Heart right ventricle (tissue), 16 donors: ENCODE measurements at regions of chr22 and their contacts with region 1.

Region 1: GRCh38 chr22:19454156-19454555 is 6.6 kb upstream of the C22orf39 start:
- DNase-seq: no peak
- ATAC-seq: no peak
- H3K4me3 ChIP-seq: no peak overlapping the region
- H3K27ac ChIP-seq: no peak overlapping the region
- H3K4me1 ChIP-seq: no peaks in the 10 kb centered on the region
- H3K27me3 ChIP-seq: no peaks in the 10 kb centered on the region
- CTCF ChIP-seq: no peak

Region 2: DNA sequence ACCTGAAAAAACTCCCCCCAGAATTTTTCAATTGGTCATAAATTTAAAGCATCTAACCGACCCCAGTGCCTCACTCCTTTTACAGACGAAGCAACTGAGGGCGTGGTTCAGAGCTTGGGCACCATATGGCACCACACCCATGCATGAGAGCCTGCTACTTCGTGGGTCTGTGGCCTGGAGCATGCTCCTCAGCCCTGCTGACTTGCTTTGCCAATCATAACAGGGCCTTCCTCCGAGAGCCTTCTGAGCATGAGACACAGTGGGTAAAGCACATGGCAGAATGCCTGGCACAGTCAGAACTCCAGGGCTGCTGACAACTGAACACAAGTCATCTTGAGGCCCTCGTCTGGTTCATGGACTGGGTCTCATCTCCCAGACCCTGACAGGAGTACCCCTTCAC is 56.0 kb before region 1 on chr22:
- intact Hi-C with region 1: loop called in 1 of 10 experiments (anchors 5 kb)
- DNase-seq: no peak
- ATAC-seq: peak in 1 of 8 donors; percentile 34
- H3K4me3 ChIP-seq: no peak overlapping the region
- H3K27ac ChIP-seq: no peak overlapping the region
- H3K4me1 ChIP-seq: peaks cover 0 to 9% (median 0%) of the 10 kb centered on the region in 9 donors
- H3K27me3 ChIP-seq: no peaks in the 10 kb centered on the region
- CTCF ChIP-seq: no peak

Region 3: DNA sequence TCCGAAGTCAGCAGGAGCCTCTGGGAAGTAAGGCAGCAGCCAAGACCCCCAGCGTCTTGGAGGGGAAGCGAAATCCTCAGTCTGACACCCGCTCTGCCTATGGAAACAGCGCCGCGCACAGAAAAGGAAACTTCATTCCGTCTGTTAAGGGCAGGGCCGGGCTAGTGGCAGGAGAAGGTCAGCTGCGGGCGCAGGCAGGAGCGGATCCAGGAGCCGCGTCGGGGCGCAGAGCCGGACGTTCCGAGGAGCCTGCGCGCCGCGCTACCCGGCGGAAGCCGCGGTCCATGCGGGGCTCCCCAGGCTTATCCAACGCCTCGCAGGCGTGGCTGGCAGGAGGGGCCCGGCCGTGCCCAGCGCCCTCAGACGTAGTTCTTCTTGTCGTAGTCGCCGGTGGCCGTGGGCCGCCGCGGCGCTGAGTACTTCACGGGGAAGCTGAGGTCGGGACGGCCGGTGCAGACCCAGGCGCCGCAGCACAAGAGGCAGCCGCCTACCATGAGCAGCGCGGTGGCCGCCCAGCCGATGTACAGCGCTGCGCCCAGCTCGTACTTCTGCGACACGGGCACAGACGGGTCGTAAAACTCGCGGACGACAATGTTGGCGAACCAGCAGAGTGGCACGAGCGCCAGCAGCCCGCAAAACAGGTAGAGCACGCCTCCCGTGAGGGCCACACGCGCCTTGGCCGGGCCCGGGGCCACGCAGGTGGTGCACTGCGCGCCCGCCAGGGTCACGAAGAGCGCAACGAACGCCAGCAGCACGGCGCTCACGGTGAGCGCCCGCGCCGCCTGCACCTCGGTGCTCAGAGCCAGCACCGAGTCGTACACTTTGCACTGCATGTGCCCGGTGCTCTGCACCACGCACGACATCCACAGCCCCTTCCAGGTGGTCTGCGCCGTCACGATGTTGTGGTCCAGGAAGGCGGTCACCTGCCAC is 69.3 kb after region 1 on chr22:
- intact Hi-C with region 1: no loop called
- DNase-seq: no peak
- ATAC-seq: peak in 5 of 8 donors; percentile 0 to 18 (median 9)
- H3K4me3 ChIP-seq: peak overlapping the region; percentile 51 to 75 (median 60)
- H3K27ac ChIP-seq: peak overlapping the region; percentile 71 to 97 (median 89)
- H3K4me1 ChIP-seq: peaks cover 19 to 78% (median 36%) of the 10 kb centered on the region in 9 donors
- H3K27me3 ChIP-seq: peaks cover 13 to 43% (median 30%) of the 10 kb centered on the region in 7 donors
- CTCF ChIP-seq: no peak